Cardiac septum (tissue), 1 donor: ENCODE measurements at regions of chr1 and their contacts with region 1.

Region 1: GRCh38 chr1:40040511-40041465 is at the start of gene CAP1:
- DNase-seq: peak; percentile 100
- total RNA-seq, gene CAP1: 82.8 TPM

Region 2: DNA sequence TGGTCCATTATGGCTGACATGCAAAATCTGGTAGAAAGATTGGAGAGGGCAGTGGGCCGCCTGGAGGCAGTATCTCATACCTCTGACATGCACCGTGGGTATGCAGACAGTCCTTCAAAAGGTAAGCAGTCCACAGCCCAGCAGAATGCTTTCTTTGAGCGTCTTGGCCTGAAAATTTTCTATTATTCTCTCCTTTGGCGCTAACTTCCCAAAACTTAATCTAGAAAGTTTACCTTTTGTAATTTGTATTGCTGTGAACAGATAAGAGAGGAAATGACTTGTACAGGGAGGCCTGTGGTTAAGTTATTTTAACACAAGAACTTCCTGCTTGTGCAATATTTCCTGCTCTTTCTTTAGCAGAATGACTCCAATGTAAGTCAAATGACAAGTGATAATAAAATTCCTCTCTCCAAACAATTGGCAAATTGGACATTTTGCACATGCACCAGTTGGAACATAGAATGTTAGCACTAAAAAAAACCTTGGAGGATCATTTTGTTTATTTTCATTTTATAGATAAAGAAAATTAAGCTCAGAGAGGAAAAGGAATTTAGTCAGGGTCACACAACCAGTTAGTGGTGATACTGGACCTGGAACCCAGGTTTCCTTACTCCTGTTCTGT is 18.7 kb after region 1 on chr1:
- intact Hi-C with region 1: loop called (anchors 2 kb)
- DNase-seq: no peak